Vagina (tissue), 2 donors: ENCODE measurements at regions of chr13 and their contacts with region 1.

Region 1: DNA sequence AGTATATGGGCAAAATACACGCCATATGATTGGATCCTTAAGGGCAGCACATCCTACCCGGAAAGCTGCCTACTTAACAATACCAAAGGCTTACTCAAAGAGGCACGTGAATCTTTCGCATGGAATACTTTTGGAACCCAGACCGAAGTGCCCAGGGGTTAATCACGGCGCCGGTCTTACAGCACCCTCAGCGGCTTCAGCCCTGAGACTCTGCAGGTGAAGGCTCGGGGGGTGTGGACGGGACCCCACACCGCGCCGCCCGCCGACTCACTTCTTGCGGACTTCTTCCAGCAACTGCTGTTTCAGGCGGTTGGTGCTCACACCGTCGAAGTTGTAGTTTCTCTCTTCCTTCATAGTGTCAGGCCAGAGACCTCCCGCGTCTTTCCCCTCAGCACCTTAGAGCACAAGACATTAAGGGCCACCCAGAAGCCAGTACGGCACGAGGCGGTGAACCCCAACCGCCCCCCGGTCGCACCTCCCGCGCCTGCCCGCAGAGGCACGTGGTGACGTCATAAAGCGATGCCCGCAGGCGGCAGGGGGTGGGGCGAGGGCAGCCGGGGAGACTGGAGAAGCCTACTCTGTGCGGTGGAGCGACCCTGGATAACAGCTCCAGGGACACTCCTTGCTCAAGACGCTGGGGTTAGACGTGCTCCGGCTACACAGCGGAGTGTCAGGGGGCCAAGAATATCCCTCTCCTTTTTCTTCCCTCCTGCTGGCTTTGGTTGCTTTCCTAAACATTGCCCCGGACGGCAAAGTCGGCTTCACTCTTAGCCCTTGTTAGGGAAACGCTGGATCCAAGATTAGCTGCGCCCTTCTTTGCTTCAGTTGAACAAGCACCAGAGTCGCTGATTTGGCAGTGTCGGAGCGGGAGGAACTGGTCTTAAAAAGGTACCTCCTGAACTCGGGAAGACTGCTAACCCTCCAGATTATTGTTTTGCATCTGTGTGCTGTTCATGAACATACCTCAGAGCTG is at the start of gene CCDC169:
- DNase-seq: peak in 1 of 2 donors; percentile 90
- H3K4me3 ChIP-seq: peak within 1 kb of the TSS; percentile 62 to 70
- H3K27ac ChIP-seq: peak within 1 kb of the TSS; percentile 67
- H3K4me1 ChIP-seq: peaks cover 18% of the 10 kb centered on the region
- H3K27me3 ChIP-seq: no peaks in the 10 kb centered on the region
- CTCF ChIP-seq: no peak
- POLR2A ChIP-seq: no peak
- total RNA-seq, gene CCDC169: not detected

Region 2: GRCh38 chr13:36346222-36347083 is 48.8 kb after region 1 on chr13 and contains the start of gene SPART:
- intact Hi-C with region 1: loop called (anchors 10 kb)
- DNase-seq: peak in 1 of 2 donors; percentile 96
- H3K4me3 ChIP-seq: peak within 1 kb of the TSS; percentile 66 to 74
- H3K27ac ChIP-seq: peak within 1 kb of the TSS; percentile 98
- H3K4me1 ChIP-seq: peaks cover 30% of the 10 kb centered on the region
- H3K27me3 ChIP-seq: no peaks in the 10 kb centered on the region
- CTCF ChIP-seq: peak; percentile 57 to 98 (median 95)
- POLR2A ChIP-seq: peak in 1 of 2 donors; percentile 71
- total RNA-seq, gene SPART: 63.8 TPM

Region 3: GRCh38 chr13:37303606-37304005 is 1006.0 kb after region 1 on chr13:
- intact Hi-C with region 1: no loop called
- DNase-seq: no peak
- H3K4me3 ChIP-seq: no peak overlapping the region
- H3K27ac ChIP-seq: no peak overlapping the region
- H3K4me1 ChIP-seq: no peaks in the 10 kb centered on the region
- H3K27me3 ChIP-seq: no peaks in the 10 kb centered on the region
- CTCF ChIP-seq: no peak
- POLR2A ChIP-seq: no peak